PC-3 (cell line): ENCODE measurements at regions of chr4 and their contacts with region 1.

Region 1: GRCh38 chr4:159764343-159764952 is 661.6 kb downstream of the RAPGEF2 start:
- DNase-seq: peak; percentile 64
- ATAC-seq: peak; percentile 83
- H3K4me3 ChIP-seq: no peak overlapping the region
- H3K27ac ChIP-seq: no peak overlapping the region
- H3K4me1 ChIP-seq: no peaks in the 10 kb centered on the region
- H3K27me3 ChIP-seq: no peaks in the 10 kb centered on the region
- CTCF ChIP-seq: peak; percentile 68

Region 2: DNA sequence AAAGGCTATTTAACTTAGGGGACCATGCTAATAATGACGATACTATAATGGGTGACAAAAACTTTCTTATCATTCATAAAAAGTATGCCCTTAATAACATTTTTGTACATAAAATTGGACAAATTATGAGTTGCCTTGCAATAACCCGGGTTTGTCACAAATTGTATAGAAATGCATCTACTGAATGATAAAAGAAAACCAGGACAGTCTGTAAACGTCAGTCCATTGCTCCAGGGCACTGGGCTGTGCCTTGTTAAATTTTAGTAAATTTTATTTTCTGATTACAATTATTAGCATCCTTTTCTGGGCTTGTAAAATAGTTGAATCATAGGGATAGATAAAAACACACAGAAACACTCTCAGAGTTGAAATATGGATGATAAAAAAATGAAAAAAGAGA is 116.7 kb after region 1 on chr4:
- CTCF ChIA-PET with region 1: no interaction called
- POLR2A ChIA-PET with region 1: no interaction called
- intact Hi-C with region 1: loop called (anchors 10 kb)
- DNase-seq: no peak
- ATAC-seq: no peak
- H3K4me3 ChIP-seq: no peak overlapping the region
- H3K27ac ChIP-seq: no peak overlapping the region
- H3K4me1 ChIP-seq: no peaks in the 10 kb centered on the region
- H3K27me3 ChIP-seq: no peaks in the 10 kb centered on the region
- CTCF ChIP-seq: no peak